ENCODE measurements at regions of chr9 and their contacts with region 1.

Region 1: DNA sequence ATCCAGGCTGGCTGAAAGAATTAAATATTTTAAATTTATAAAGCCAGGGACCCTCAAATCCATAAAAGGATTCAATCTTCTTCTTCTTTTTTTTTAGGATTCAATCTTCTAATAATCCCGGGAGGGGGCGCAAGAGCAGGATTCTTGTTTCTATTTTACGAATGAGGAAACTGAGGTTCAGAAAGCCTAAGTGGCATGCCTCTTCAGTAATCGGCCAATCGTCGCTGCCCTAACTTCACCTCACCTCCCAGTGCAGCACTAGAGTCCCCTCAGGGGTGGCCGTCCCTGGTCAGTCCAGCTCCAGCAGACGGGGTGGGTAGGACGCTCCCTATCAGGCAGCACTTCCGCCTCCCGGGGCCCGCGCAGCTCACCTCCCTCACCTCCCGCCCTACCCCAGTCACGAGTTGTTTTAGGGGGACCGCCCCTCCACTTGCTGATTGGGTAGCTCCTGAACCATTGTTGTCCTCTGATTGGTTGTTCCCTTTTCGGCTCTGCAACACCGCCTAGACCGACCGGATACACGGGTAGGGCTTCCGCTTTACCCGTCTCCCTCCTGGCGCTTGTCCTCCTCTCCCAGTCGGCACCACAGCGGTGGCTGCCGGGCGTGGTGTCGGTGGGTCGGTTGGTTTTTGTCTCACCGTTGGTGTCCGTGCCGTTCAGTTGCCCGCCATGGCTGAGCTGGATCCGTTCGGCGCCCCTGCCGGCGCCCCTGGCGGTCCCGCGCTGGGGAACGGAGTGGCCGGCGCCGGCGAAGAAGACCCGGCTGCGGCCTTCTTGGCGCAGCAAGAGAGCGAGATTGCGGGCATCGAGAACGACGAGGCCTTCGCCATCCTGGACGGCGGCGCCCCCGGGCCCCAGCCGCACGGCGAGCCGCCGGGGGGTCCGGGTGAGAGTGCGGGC is at the start of gene CLTA:
- DNase-seq: peak; percentile 90 to 96 (median 95)
- H3K4me3 ChIP-seq: peak within 1 kb of the TSS; percentile 82
- H3K4me3 Mint-ChIP-seq: peak within 1 kb of the TSS; percentile 91 to 97 (median 95)
- H3K27ac ChIP-seq: peak within 1 kb of the TSS; percentile 90
- H3K27ac Mint-ChIP-seq: peak within 1 kb of the TSS; percentile 83 to 98 (median 95)
- H3K4me1 ChIP-seq: peaks cover 41% of the 10 kb centered on the region
- H3K4me1 Mint-ChIP-seq: peaks cover 49 to 54% (median 53%) of the 10 kb centered on the region in 3 donors
- H3K27me3 ChIP-seq: no peaks in the 10 kb centered on the region
- H3K27me3 Mint-ChIP-seq: peaks cover 0 to 4% of the 10 kb centered on the region in 2 donors
- total RNA-seq, gene CLTA: 185 to 186 TPM

Region 2: GRCh38 chr9:36174731-36175130 is 15.9 kb before region 1 on chr9:
- CTCF ChIA-PET with region 1: interaction called, 10 read pairs
- POLR2A ChIA-PET with region 1: no interaction called
- DNase-seq: no peak
- H3K4me3 ChIP-seq: no peak overlapping the region
- H3K4me3 Mint-ChIP-seq: no peak overlapping the region
- H3K27ac ChIP-seq: no peak overlapping the region
- H3K27ac Mint-ChIP-seq: no peak overlapping the region
- H3K4me1 ChIP-seq: no peaks in the 10 kb centered on the region
- H3K4me1 Mint-ChIP-seq: peaks cover 0 to 3% (median 0%) of the 10 kb centered on the region in 3 donors
- H3K27me3 ChIP-seq: no peaks in the 10 kb centered on the region
- H3K27me3 Mint-ChIP-seq: peaks cover 6% of the 10 kb centered on the region in 2 donors

Region 3: DNA sequence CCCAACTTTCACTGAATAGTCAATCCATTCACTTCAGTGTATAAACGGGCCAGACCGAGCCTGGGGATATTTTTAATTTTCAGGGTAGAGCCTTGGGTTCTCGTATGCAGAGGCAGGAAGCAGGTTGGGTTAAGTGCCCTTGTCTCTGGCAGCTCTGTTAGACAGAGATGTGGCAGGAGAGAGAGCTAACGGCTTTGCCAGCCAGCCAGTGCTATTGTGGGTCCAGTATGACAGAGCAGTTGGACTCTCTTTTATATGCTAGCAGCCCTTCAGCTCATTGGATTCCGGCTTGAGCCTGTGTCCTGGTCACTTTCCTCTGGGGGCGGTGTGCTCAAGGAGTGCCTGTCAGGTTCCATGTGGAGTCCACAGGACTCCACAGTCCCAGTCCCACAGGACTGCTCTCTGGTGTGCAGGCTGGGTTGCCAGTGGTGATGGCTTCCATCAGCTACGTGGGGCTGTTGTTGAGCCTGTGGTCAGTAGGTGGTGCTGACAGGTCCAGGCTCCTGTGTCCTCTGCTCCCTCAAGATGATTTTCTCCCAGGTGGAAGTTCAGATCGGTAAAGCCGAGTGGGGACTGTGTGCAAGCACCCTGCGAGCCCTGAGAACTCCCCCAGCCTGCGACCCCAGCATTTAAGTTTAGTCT is 14.4 kb after region 1 on chr9:
- CTCF ChIA-PET with region 1: interaction called, 17 read pairs
- POLR2A ChIA-PET with region 1: interaction called, 5 read pairs
- DNase-seq: no peak
- H3K4me3 ChIP-seq: no peak overlapping the region
- H3K4me3 Mint-ChIP-seq: no peak overlapping the region
- H3K27ac ChIP-seq: no peak overlapping the region
- H3K27ac Mint-ChIP-seq: peak overlapping the region in 3 of 8 donors; percentile 11 to 72 (median 71)
- H3K4me1 ChIP-seq: peaks cover 23% of the 10 kb centered on the region
- H3K4me1 Mint-ChIP-seq: peaks cover 24 to 57% (median 55%) of the 10 kb centered on the region in 3 donors
- H3K27me3 ChIP-seq: no peaks in the 10 kb centered on the region
- H3K27me3 Mint-ChIP-seq: peaks cover 0 to 2% of the 10 kb centered on the region in 2 donors

Region 4: DNA sequence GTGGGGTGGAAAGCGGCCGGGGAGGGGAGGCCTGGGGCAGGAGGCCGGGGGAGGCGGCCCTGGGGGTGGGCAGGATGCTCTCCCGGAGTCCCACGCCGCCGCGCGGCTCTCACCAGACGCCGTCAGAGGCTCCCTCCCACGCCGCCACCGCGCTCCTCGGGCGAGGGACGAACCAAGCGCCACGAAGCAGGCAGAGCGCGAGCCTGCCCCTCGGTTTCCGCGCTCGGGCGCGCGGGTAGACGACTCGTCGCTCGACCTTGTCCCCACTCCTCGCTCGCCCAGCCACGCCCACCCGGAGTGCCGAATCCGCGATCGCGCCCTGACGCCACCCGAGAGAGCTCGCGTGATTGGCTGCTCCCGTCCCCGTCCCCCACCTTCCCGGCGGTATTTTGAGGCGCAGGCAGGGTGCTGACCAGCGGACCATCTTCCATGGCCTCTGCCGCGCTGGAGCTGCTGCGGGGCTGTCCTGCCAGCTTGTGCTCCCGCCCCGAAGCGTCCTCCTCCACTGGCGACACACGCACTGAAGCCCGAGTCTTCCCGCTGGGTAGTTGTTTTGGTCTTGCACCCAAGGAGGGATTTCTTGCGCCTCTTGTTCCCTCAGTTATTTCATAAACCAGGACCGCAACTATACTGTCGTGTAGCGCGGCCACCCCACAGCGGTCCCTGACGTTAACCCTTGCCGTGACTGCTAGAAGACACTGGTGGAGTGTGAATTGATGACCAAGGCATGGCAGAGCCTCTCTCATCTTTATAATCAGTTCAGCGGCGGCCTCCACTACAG is 67.8 kb after region 1 on chr9 and contains the start of gene GNE:
- CTCF ChIA-PET with region 1: no interaction called
- POLR2A ChIA-PET with region 1: interaction called, 11 read pairs
- DNase-seq: peak; percentile 95 to 98 (median 97)
- H3K4me3 ChIP-seq: peak within 1 kb of the TSS; percentile 94
- H3K4me3 Mint-ChIP-seq: peak within 1 kb of the TSS; percentile 92 to 99 (median 98)
- H3K27ac ChIP-seq: peak within 1 kb of the TSS; percentile 81
- H3K27ac Mint-ChIP-seq: peak within 1 kb of the TSS; percentile 89 to 98 (median 96)
- H3K4me1 ChIP-seq: peaks cover 11% of the 10 kb centered on the region
- H3K4me1 Mint-ChIP-seq: peaks cover 13 to 25% (median 16%) of the 10 kb centered on the region in 3 donors
- H3K27me3 ChIP-seq: no peaks in the 10 kb centered on the region
- H3K27me3 Mint-ChIP-seq: no peaks in the 10 kb centered on the region
- total RNA-seq, gene GNE: 11.6 to 12.7 TPM

Region 5: DNA sequence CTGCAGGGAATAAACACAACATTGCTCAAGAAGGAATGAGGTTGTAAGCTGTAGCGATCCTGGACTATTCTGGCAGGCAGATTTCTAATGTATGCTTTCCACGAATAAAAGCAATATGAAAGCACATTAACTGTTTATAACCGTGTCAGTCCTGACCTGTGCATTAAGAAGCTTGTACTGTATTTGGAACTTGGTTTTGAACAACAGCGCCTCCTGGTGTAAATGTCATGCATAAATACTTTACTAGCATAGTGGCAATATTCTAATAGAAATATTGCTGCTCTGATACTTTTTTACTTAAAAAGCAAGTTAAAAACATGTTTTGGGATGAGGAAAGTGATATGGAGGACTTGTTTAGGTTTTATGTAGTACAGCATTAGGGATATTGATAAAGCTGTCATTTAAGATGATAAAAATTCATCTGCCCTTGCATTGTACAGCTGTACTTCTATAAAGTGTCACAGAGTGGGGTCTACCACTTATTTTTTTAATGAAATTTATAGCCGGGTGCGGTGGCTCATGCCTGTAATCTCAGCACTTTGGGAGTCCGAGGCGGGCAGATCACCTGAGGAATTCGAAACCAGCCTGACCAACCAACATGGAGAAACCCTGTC is 138.3 kb after region 1 on chr9:
- CTCF ChIA-PET with region 1: interaction called, 35 read pairs
- POLR2A ChIA-PET with region 1: interaction called, 3 read pairs
- DNase-seq: peak in 4 of 5 donors; percentile 10 to 55 (median 30)
- H3K4me3 ChIP-seq: no peak overlapping the region
- H3K4me3 Mint-ChIP-seq: no peak overlapping the region
- H3K27ac ChIP-seq: no peak overlapping the region
- H3K27ac Mint-ChIP-seq: peak overlapping the region in 1 of 8 donors; percentile 50
- H3K4me1 ChIP-seq: no peaks in the 10 kb centered on the region
- H3K4me1 Mint-ChIP-seq: peaks cover 3 to 6% (median 4%) of the 10 kb centered on the region in 3 donors
- H3K27me3 ChIP-seq: no peaks in the 10 kb centered on the region
- H3K27me3 Mint-ChIP-seq: peaks cover 0 to 2% of the 10 kb centered on the region in 2 donors

Measured in CD8-positive, alpha-beta memory T cell (primary cell).